Caco-2 (cell line): ENCODE measurements at regions of chr16 and their contacts with region 1.

Region 1: DNA sequence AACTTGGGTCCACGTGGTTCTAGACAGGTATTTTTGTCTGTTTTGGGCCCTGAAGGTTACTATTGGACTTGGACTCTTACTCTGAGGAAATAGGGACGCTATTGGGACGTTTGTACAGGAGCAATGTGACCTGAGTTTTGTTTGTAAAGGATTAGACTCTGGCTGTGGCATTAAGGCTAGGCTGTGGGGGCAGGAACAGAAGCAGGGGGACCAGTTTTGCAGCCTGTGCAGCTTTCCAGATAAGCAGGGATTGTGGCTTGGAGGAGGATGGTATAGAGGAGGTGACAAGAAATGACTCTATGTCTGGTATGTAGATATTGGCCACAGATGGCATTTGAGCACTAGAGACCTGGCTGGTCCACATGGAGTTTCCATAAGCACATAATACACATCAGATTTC is 12.8 kb downstream of the NOD2 start:
- DNase-seq: peak; percentile 80 to 86
- H3K4me3 ChIP-seq: no peak overlapping the region
- H3K4me3 Mint-ChIP-seq: peak overlapping the region; percentile 0
- H3K27ac Mint-ChIP-seq: peak overlapping the region; percentile 6
- H3K4me1 ChIP-seq: peaks cover 18% of the 10 kb centered on the region
- H3K4me1 Mint-ChIP-seq: peaks cover 16% of the 10 kb centered on the region
- H3K27me3 ChIP-seq: no peaks in the 10 kb centered on the region
- H3K27me3 Mint-ChIP-seq: no peaks in the 10 kb centered on the region
- CTCF ChIP-seq: no peak

Region 2: GRCh38 chr16:50719518-50720337 is 13.5 kb after region 1 on chr16:
- CTCF ChIA-PET with region 1: no interaction called
- POLR2A ChIA-PET with region 1: no interaction called
- intact Hi-C with region 1: loop called (anchors 1 kb)
- DNase-seq: peak; percentile 19 to 79
- H3K4me3 ChIP-seq: peak overlapping the region; percentile 16; the same call in 1 of the 2 replicates
- H3K4me3 Mint-ChIP-seq: peak overlapping the region; percentile 50
- H3K27ac Mint-ChIP-seq: peak overlapping the region; percentile 48
- H3K4me1 ChIP-seq: peaks cover 24% of the 10 kb centered on the region
- H3K4me1 Mint-ChIP-seq: peaks cover 20% of the 10 kb centered on the region
- H3K27me3 ChIP-seq: no peaks in the 10 kb centered on the region
- H3K27me3 Mint-ChIP-seq: no peaks in the 10 kb centered on the region
- CTCF ChIP-seq: peak in 1 of 2 experiments; percentile 1

Region 3: DNA sequence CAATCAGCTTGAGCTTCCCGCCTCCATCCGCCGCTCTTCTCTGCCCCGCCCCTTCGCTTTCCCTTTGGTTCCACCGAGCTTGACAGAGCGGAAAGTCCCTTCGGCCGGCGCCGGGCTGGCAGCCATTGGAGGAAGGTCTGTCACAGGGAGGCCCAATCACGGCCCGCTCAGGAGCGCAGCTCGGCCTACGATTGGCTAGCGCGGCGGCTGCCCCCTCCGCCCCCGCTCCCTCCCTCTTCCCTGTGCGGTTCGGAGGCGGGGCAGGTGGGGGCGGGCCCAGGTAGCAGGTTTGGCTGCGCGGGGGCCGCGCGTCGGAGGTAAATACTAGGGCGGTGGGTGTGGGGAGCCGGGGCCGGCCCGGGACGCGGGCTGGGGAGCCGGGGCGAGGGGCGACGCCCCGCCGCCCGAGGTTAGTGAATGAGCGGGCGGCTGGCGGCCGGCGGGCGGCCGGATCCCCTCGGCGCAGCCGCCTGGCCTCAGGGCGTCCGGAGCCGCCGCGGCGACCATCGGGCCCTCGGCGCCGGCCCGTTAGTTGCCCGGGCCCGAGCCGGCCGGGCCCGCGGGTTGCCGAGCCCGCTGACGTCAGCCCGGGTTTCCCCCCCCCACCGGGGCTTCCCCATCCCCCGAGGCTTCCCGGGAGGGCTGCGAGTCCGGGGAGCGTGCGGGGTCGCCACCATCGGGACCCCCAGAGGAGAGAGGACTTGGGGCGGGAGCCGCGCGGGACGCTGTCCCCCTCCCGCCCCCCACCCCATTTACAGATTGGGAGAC is 35.7 kb after region 1 on chr16 and contains the start of gene CYLD:
- CTCF ChIA-PET with region 1: no interaction called
- POLR2A ChIA-PET with region 1: no interaction called
- intact Hi-C with region 1: loop called (anchors 1 kb)
- DNase-seq: peak; percentile 100
- H3K4me3 ChIP-seq: peak within 1 kb of the TSS; percentile 76
- H3K4me3 Mint-ChIP-seq: peak within 1 kb of the TSS; percentile 78
- H3K27ac Mint-ChIP-seq: no peak within 1 kb of the TSS
- H3K4me1 ChIP-seq: no peaks in the 10 kb centered on the region; the same call in 1 of the 2 replicates
- H3K4me1 Mint-ChIP-seq: no peaks in the 10 kb centered on the region
- H3K27me3 ChIP-seq: peaks cover 1% of the 10 kb centered on the region; the same call in 1 of the 2 replicates
- H3K27me3 Mint-ChIP-seq: peaks cover 8% of the 10 kb centered on the region
- CTCF ChIP-seq: no peak
- total RNA-seq, gene CYLD: 9.8 and 13.1 TPM in 2 replicates